ENCODE measurements at regions of chr21 and their contacts with region 1.

Region 1: DNA sequence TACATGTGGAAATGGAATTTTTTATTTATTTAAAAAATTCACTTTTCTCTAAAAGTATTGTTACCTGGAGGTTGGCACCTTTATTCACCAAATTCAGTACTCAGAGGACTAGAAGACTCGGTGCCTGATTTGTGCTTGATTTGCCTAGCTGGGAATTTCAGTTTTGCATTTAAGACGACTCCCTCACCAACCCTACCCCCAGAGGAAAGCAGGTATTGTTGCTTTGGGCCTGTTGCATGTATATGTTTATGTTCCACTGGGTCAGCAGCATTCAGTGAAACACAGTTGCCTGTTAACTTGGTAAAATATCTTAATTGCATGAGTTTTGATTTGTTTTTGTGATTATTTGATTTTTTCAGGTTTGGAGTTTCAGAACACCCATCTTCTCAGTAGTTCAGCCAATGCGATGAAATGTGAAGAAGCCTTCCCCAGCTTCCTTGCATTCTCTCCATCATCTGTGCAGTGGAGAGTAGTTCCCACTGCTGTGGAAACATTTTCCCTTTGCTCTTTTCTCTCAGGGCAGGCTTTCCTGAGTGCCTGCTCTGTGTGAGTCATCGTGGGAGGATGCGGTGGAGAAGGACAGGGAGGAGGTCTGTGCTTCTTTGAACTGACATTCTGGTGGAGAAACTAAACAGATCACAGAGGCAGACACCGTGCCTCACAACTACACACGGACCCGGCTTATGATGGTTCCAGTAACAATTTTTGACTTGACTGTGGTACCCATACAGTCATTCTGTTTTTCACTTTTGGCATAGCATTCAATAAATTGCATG is 6.4 kb downstream of the ADARB1 start:
- DNase-seq: peak; percentile 88
- H3K4me3 ChIP-seq: no peak overlapping the region
- H3K27ac ChIP-seq: peak overlapping the region; percentile 58 to 82 (median 74)
- H3K4me1 ChIP-seq: peaks cover 0 to 92% (median 73%) of the 10 kb centered on the region in 4 donors
- H3K27me3 ChIP-seq: no peaks in the 10 kb centered on the region
- CTCF ChIP-seq: no peak
- EP300 ChIP-seq: peak in 3 of 4 donors; percentile 30 to 64 (median 46)
- POLR2A ChIP-seq: no peak

Region 2: GRCh38 chr21:45041351-45041805 is 39.4 kb before region 1 on chr21:
- intact Hi-C with region 1: no loop called
- DNase-seq: peak; percentile 94
- H3K4me3 ChIP-seq: no peak overlapping the region
- H3K27ac ChIP-seq: peak overlapping the region; percentile 48 to 74 (median 58)
- H3K4me1 ChIP-seq: peaks cover 0 to 16% (median 12%) of the 10 kb centered on the region in 4 donors
- H3K27me3 ChIP-seq: no peaks in the 10 kb centered on the region
- CTCF ChIP-seq: no peak
- EP300 ChIP-seq: peak in 1 of 4 donors; percentile 8
- POLR2A ChIP-seq: no peak

Region 3: DNA sequence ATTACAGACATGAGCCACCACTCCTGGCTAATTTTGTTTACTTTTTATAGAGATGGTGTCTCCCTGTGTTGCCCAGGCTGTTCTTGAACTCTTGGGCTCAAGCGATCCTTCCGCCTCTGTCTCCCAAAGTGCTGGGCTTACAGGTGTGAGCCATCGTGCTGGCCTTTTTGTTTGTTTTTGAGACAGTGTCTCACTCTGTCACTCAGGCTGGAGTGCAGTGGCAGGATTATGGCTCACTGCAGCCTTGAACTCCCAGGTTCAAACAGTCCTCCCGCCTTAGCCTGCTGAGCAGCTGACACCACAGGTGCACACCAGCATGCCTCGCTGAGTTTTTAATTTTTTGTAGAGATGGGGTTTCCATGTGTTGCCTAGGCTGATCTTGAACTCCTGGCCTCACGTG is 42.6 kb after region 1 on chr21:
- intact Hi-C with region 1: loop called (anchors 2 kb)
- DNase-seq: no peak
- H3K4me3 ChIP-seq: no peak overlapping the region
- H3K27ac ChIP-seq: peak overlapping the region in 3 of 4 donors; percentile 76 to 81 (median 77)
- H3K4me1 ChIP-seq: peaks cover 0 to 96% (median 74%) of the 10 kb centered on the region in 4 donors
- H3K27me3 ChIP-seq: no peaks in the 10 kb centered on the region
- CTCF ChIP-seq: no peak
- EP300 ChIP-seq: no peak
- POLR2A ChIP-seq: no peak

Measured in sigmoid colon (tissue), 7 donors.